SK-N-SH (cell line): ENCODE measurements at regions of chr5 and their contacts with region 1.

Region 1: GRCh38 chr5:138138949-138139780 is at the start of gene NME5:
- DNase-seq: peak; percentile 88
- H3K4me3 ChIP-seq: peak within 1 kb of the TSS; percentile 77 to 80
- H3K27ac ChIP-seq: peak within 1 kb of the TSS in 1 of 2 experiments; percentile 12; a peak in 1 of 4 replicates
- H3K4me1 ChIP-seq: no peaks in the 10 kb centered on the region
- H3K27me3 ChIP-seq: no peaks in the 10 kb centered on the region
- CTCF ChIP-seq: no peak
- EP300 ChIP-seq: no peak
- RAD21 ChIP-seq: no peak
- polyA plus RNA-seq, gene NME5: 3.7 and 4.1 TPM in 2 replicates

Region 2: DNA sequence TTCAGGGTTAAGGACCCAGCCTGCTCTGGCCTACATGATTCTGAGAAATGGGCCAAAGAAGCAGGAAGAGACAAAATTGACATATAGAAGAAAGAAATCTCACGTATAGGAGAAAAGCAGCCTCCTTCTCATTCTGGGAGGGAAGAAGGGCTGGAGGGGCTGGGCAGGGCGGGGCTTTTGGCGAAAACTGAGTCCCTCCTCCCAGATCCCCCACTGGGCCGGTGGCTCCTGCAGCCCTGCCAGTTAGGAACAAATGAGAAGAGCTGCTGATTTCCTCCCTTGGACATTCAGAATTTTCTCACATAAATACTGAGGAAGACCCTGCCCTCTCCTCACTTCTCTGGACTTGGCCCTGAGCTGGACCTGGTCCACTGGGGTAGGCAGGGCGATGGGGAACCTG is 55.5 kb before region 1 on chr5 and contains the start of gene WNT8A:
- CTCF ChIA-PET with region 1: interaction called, 91 read pairs
- POLR2A ChIA-PET with region 1: no interaction called
- DNase-seq: no peak
- H3K4me3 ChIP-seq: no peak within 1 kb of the TSS
- H3K27ac ChIP-seq: no peak within 1 kb of the TSS
- H3K4me1 ChIP-seq: no peaks in the 10 kb centered on the region
- H3K27me3 ChIP-seq: no peaks in the 10 kb centered on the region
- CTCF ChIP-seq: no peak
- EP300 ChIP-seq: no peak
- RAD21 ChIP-seq: no peak
- polyA plus RNA-seq, gene WNT8A: not detected in 2 replicates

Region 3: GRCh38 chr5:138157626-138158025 is 18.5 kb after region 1 on chr5:
- CTCF ChIA-PET with region 1: no interaction called
- POLR2A ChIA-PET with region 1: no interaction called
- DNase-seq: no peak
- H3K4me3 ChIP-seq: no peak overlapping the region
- H3K27ac ChIP-seq: no peak overlapping the region
- H3K4me1 ChIP-seq: no peaks in the 10 kb centered on the region
- H3K27me3 ChIP-seq: no peaks in the 10 kb centered on the region
- CTCF ChIP-seq: no peak
- EP300 ChIP-seq: no peak
- RAD21 ChIP-seq: no peak